ENCODE measurements at regions of chr1 and their contacts with region 1.

Region 1: GRCh38 chr1:233790662-233791375 is 113.7 kb upstream of the SLC35F3 start:
- DNase-seq: no peak

Region 2: GRCh38 chr1:233440951-233441401 is 349.8 kb before region 1 on chr1:
- intact Hi-C with region 1: loop called (anchors 2 kb)
- DNase-seq: no peak

Region 3: DNA sequence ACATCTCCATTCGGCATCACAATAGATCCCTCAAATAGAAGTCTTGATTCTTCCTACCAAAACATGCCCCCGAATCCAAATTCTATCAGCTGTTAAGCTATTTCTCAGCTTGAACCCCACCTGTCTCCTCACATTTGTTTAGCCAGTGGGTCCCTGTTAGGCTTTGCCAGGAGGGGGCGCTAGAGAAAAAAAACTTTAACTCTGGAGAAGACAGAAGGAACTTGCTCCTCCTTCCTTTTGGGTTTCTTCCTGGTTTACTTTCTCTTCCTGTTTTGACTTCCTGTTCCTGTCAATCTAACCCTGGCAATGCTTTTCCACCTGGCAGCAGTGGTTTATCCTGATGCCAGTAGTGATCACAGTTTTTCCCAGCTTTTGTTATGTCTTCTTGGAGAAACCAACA is 272.5 kb before region 1 on chr1:
- intact Hi-C with region 1: loop called (anchors 2 kb)
- DNase-seq: no peak

Region 4: GRCh38 chr1:233933339-233933738 is 142.5 kb after region 1 on chr1:
- intact Hi-C with region 1: no loop called
- DNase-seq: no peak

Region 5: GRCh38 chr1:233960386-233960785 is 169.6 kb after region 1 on chr1:
- intact Hi-C with region 1: no loop called
- DNase-seq: no peak

Region 6: GRCh38 chr1:234114648-234115307 is 324.0 kb after region 1 on chr1:
- intact Hi-C with region 1: no loop called
- DNase-seq: no peak